ENCODE measurements at regions of chr1 and their contacts with region 1.

Region 1: GRCh38 chr1:211514030-211514754 is 22.2 kb upstream of the RD3 start:
- DNase-seq: peak; percentile 40 to 92
- H3K4me3 ChIP-seq: no peak overlapping the region
- H3K27ac ChIP-seq: peak overlapping the region in 1 of 2 donors; percentile 66
- H3K4me1 ChIP-seq: peaks cover 3 to 15% of the 10 kb centered on the region in 2 donors
- H3K27me3 ChIP-seq: no peaks in the 10 kb centered on the region
- CTCF ChIP-seq: peak; percentile 71 to 88 (median 87)

Region 2: DNA sequence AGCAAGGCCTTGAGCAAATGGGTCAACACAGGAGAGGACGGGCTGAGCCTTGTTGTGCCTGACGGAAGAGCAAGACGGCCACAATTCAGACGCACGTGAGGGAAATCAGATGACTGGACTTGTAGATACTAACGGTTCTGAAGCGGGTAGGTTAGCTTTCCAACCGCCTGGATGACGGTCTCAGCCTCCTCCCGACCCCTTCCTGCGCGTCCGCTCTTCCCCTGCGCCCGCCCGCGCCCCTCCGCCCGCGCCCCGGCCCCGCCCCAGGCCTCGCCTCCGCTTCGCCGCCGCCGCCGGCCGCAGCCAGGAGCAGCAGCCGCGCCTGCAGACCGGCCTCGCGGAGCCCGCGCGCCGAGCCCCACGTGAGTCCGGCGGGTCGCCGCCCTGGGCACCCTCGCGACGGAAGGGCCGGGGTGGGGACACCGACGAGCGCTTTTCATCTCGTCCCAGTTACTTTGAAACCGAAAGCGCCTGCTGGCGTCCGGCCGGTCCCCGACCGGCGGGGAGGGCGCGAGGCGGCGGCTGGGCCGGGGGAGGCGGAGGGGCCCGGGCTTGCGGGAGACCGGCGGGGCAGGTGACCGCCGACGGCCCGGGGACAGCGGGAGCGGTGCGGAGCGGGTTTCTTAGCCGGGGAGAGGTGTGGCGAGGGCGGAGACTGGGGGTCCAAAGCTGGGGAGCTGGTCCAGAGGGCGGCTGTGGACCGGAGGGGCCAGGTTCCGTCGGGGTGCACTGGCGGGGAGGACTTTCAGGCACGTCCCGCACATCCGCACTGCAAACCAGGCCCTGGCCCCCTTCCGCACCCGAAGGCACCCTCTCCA is 187.5 kb before region 1 on chr1 and contains the start of gene TRAF5:
- intact Hi-C with region 1: loop called (anchors 1 kb)
- DNase-seq: peak in 1 of 2 donors; percentile 72
- H3K4me3 ChIP-seq: peak within 1 kb of the TSS; percentile 91 to 93
- H3K27ac ChIP-seq: peak within 1 kb of the TSS; percentile 84 to 98
- H3K4me1 ChIP-seq: peaks cover 15 to 31% of the 10 kb centered on the region in 2 donors
- H3K27me3 ChIP-seq: no peaks in the 10 kb centered on the region
- CTCF ChIP-seq: no peak
- total RNA-seq, gene TRAF5: 3.9 TPM

Region 3: DNA sequence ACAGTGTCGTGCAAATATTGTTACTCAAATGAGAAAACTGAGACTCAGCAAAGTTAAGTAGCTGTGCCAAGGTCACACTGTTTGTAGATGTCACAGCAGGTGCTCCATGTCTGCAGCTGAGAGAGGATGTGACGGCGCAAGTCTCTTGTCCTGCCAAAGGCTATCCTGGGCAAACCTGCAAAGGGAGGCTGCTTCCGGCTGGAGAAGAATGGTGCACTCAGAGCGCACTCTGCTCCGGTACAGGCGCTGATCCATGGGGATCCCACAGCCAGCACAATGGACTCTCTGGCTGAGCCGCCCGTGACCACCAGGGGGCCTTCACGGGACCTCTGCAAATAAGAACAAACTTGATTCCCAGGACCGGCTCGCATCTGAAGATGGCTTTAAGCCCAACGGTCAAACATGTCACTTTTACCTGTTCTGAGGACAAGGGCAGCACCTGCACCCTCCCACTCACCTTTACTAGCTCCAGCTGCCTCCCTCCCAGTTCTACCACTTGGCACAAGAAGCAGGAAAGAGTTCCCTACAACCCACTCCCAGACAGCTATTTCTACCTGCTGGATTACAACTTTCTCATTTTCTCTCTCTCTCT is 44.2 kb before region 1 on chr1:
- intact Hi-C with region 1: loop called (anchors 1 kb)
- DNase-seq: peak; percentile 15 to 87
- H3K4me3 ChIP-seq: no peak overlapping the region
- H3K27ac ChIP-seq: no peak overlapping the region
- H3K4me1 ChIP-seq: peaks cover 0 to 5% of the 10 kb centered on the region in 2 donors
- H3K27me3 ChIP-seq: no peaks in the 10 kb centered on the region
- CTCF ChIP-seq: peak; percentile 63 to 88 (median 82)

Region 4: DNA sequence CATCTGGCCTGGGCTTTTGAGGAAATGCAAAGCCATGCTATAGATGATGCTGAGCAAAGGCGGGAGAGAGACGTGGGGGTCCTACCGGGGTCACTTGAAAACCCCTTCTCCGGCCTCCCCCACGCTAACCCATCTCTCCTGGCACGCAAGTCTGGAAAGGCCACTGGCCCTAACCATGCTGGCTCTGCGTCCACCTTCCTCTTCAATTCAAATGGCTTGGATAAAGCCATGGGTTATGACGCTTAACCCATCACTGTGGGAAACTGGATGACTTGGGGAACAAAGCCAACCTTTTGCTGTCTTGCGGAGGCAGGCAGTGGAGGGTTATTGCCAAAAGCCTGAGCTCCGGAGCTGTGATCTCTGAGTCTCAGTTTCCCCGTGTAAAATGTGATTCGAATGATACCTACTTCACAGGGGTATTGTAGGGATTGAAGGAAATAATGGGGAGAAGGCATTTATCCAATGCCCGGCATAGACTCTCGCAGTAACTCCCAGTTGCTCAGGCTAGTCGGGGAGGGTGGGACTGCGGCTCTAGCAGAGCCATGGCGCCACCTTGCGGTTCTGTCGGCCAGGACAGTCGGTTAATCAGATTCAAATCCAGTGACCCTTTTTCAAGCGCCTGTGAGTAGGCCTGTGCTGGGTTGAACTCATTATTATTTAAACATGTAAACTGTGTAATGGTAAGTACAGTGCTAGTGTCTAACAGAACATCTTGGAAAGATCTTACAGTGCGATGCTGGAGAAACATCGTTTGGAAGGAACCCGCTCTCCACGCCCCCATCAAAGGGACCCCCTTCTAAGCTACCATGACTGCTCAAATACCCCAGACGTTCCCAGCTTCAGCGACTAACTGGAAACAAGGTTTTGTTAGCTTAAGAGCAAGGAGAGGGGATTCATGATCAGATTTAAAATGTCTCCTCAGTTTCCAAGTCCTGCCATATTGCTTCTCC is 140.9 kb after region 1 on chr1:
- intact Hi-C with region 1: loop called (anchors 1 kb)
- DNase-seq: peak in 1 of 2 donors; percentile 94
- H3K4me3 ChIP-seq: peak overlapping the region in 1 of 2 donors; percentile 24
- H3K27ac ChIP-seq: no peak overlapping the region
- H3K4me1 ChIP-seq: no peaks in the 10 kb centered on the region
- H3K27me3 ChIP-seq: no peaks in the 10 kb centered on the region
- CTCF ChIP-seq: peak; percentile 85 to 89 (median 87)

Measured in ascending aorta (tissue), 2 donors.